PC-3 (cell line): ENCODE measurements at regions of chr2 and their contacts with region 1.

Region 1: DNA sequence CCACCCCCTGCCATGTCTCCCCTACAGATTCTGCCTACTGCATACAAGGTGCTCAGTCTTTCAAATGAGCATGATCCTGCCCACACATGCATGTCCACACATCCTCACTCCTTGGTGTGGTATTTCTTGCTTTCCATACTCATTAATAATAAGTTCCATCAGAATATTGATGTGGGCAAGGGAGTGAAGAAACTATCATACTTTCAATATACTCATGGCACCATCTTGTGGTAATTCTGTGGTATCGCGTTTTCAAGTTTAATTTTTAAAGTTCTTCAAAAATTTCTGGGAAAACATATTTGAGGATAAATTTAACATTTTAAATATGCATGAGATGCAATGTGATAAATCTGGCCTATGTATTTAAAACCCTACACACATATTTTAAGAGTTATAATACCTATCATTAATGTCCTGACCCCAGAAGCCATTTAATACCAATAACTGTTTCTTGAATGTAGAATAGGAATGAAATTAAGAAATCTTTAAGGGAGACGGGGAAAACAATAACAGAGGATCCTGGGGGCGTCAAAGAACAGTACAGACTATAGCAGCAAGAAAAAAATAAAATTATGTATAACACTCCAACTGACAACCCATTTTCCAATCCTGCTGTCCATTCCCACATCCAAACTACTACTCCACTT is 110.1 kb downstream of the ZNF385B start:
- DNase-seq: peak; percentile 50
- ATAC-seq: peak; percentile 33; the same call in 1 of the 2 replicates
- H3K4me3 ChIP-seq: no peak overlapping the region
- H3K27ac ChIP-seq: no peak overlapping the region
- H3K4me1 ChIP-seq: no peaks in the 10 kb centered on the region
- H3K27me3 ChIP-seq: no peaks in the 10 kb centered on the region
- CTCF ChIP-seq: peak; percentile 83

Region 2: DNA sequence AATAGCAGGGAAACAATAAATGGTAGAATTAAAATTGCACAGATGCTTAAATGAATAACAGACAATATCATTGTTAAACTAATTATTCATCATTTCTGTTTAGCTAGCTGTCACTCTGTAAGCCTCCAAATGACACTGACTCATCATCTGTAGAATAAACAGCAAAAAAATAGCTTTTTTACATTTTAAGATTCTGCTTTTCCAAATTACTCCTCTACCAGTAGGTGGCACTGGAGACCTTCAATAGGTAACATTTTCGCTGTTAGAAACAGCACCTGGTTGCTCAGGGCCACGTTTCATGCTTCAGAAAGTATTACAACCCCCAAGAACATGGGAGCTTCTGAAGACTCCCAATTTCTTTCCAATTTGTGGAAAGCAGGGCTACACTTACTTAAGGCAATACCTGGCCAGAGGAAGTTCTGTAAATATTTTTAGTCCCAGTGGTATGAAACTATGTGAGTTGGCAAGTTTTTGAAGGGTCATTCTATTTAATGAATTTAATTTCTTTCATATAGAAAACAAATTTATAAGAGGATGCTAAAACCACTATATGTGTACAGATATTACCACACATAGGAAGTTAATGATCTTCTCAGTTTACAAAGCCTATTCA is 989.4 kb before region 1 on chr2:
- CTCF ChIA-PET with region 1: no interaction called
- POLR2A ChIA-PET with region 1: no interaction called
- intact Hi-C with region 1: loop called (anchors 5 kb)
- DNase-seq: peak; percentile 85
- ATAC-seq: peak; percentile 53
- H3K4me3 ChIP-seq: no peak overlapping the region
- H3K27ac ChIP-seq: no peak overlapping the region
- H3K4me1 ChIP-seq: peaks cover 27% of the 10 kb centered on the region
- H3K27me3 ChIP-seq: no peaks in the 10 kb centered on the region
- CTCF ChIP-seq: peak; percentile 95

Region 3: DNA sequence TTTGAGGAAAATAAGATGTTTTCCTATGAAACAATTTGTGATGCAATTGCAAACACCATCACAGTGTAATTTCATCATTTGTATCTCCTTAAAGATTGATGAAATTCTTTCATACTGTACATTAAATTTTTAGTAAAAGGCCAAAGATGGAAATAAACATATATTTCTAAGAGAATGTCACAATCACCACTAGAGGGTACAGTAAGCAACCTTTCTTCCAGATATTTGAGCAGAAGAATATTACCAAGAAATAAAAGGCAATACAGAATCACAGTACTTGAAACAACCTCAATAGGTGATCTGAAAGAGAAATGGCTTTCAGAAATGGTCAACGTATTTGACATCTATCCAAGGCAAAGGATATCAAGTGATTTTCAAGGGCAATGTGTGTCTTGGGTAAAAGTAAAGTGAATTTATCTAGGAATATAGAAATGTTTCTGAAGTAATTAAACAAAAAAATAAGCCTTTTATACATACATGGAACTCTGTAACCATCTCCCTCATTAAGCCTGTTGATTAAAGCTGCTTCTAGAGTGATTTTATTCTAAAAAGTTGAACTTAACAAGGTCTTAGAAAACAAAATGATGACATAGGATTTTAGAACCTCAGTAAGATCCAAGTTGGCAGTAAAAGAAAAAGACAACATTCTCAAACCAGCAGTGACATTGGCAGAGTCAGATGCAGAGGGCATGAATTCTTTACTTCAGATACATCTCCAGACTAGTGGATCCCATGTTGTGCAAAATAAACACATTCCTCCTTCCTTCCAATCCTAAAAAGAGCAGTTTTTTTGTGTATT is 396.3 kb before region 1 on chr2:
- CTCF ChIA-PET with region 1: no interaction called
- POLR2A ChIA-PET with region 1: no interaction called
- intact Hi-C with region 1: loop called (anchors 1 kb)
- DNase-seq: peak; percentile 44
- ATAC-seq: no peak
- H3K4me3 ChIP-seq: no peak overlapping the region
- H3K27ac ChIP-seq: no peak overlapping the region
- H3K4me1 ChIP-seq: no peaks in the 10 kb centered on the region
- H3K27me3 ChIP-seq: no peaks in the 10 kb centered on the region
- CTCF ChIP-seq: peak; percentile 73

Region 4: DNA sequence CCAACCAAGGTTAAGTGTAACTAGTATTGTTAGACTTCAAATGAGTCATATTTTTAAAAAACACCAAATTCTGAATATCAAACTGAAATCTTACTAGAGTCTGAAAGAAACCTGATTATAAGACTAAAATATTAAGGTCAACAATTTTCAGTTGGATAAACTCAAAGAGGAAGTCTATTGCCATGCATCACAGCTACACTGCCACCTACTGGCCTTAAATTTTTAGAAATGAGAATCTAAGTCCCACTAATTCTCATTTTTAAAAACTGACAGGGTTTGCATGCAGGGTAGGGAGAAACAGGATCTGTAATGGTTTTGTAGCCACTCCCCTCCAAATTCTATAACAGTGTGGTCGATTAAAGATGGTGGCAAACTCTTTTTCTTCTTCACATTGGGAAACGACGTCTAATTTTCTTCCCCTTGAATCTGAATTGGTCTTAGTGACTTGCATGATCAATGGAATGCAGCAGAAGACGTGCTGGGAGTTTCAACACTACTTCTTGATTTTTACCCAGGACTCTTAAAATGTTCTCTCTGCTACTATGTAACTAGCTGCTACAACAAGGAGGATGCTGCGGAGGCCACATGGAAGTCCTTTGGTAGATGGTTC is 310.5 kb before region 1 on chr2:
- CTCF ChIA-PET with region 1: no interaction called
- POLR2A ChIA-PET with region 1: no interaction called
- intact Hi-C with region 1: loop called (anchors 5 kb)
- DNase-seq: peak; percentile 76
- ATAC-seq: peak; percentile 27; the same call in 1 of the 2 replicates
- H3K4me3 ChIP-seq: no peak overlapping the region
- H3K27ac ChIP-seq: no peak overlapping the region
- H3K4me1 ChIP-seq: peaks cover 4% of the 10 kb centered on the region
- H3K27me3 ChIP-seq: no peaks in the 10 kb centered on the region
- CTCF ChIP-seq: peak; percentile 84

Region 5: DNA sequence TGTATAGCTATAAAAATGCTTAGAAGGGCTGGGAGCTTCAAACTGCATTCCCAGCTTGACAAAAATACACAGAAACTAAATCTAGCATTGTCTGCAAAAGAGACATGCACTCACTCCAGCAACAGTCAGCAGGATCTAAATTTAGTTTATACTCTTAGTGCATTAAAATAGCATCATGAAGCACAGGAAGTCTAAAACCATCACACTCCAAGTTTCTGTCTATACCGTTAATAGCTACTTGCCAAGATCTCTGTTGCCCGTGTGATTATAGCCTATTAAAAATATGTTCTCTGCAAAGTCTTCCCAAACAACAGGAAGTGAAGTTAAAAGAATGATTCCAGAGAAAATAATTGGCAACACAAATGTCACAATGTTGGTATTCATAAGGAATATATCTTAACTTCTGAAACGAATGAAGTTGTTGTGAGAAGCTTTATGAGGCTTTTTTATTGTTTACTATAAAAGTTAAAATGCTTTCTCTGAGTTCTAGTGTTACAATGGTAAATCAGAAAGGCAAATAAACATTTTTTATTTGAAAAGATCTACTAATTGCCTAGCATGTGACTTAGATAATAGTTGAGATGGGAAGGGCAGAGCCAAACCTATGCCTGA is 74.1 kb before region 1 on chr2:
- CTCF ChIA-PET with region 1: no interaction called
- POLR2A ChIA-PET with region 1: no interaction called
- intact Hi-C with region 1: loop called (anchors 5 kb)
- DNase-seq: peak; percentile 30
- ATAC-seq: peak; percentile 90
- H3K4me3 ChIP-seq: no peak overlapping the region
- H3K27ac ChIP-seq: no peak overlapping the region
- H3K4me1 ChIP-seq: 0 out of 2 replicates have a peak, but pooled peaks cover 6% of the 10 kb centered on the region
- H3K27me3 ChIP-seq: no peaks in the 10 kb centered on the region
- CTCF ChIP-seq: no peak

Region 6: GRCh38 chr2:180077295-180077906 is 326.1 kb after region 1 on chr2:
- CTCF ChIA-PET with region 1: no interaction called
- POLR2A ChIA-PET with region 1: no interaction called
- intact Hi-C with region 1: loop called (anchors 2 kb)
- DNase-seq: peak; percentile 61
- ATAC-seq: peak; percentile 56
- H3K4me3 ChIP-seq: no peak overlapping the region
- H3K27ac ChIP-seq: no peak overlapping the region
- H3K4me1 ChIP-seq: 0 out of 2 replicates have a peak, but pooled peaks cover 7% of the 10 kb centered on the region
- H3K27me3 ChIP-seq: no peaks in the 10 kb centered on the region
- CTCF ChIP-seq: peak; percentile 89